RWPE1 (cell line): ENCODE measurements at regions of chr20 and their contacts with region 1.

Region 1: GRCh38 chr20:2206957-2207769 is 88.6 kb upstream of the TGM3 start:
- DNase-seq: peak; percentile 68
- H3K27ac ChIP-seq: no peak overlapping the region
- CTCF ChIP-seq: peak; percentile 83

Region 2: DNA sequence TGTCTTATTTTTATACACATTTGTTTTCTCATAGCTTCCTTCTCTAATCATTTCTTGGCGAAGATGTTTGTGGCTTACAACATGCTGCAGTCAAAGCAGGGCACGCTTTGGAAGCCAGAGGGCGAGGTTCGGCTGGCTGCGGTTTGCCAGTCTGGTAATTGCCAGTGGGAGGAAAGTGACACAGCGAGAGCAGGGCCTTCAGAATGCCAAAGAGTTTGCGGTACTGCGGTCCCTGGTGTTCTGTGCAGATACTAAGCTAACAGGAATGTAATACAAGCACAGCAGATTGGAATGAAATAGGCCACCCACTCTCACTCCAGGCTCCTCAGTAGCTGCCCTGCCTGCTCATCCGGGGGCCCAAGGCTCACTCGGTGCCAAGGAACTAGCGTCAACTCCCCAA is 29.9 kb after region 1 on chr20:
- CTCF ChIA-PET with region 1: interaction called, 27 read pairs
- POLR2A ChIA-PET with region 1: interaction called, 3 read pairs
- DNase-seq: peak; percentile 89
- H3K27ac ChIP-seq: peak overlapping the region; percentile 80
- CTCF ChIP-seq: peak; percentile 55; the same call in 1 of the 2 replicates

Region 3: DNA sequence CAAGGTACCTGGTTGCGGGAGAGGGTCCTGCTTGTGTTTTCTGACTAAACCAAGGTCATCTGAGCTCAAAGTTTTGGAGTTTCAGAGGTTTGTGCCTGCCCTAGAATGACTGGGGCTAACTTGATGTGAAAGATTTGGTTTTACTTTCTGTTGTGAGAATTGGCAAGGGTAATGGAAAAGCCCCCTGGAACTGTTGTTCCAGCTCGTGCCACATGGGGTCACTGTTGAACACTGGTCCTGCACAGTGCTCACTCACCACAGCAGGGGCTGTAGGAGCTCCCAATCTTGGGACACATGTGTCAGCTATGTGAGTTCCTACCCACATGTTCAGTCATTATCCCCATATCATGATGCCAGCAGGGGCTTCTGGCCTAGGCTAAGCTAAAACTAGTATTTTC is 180.0 kb after region 1 on chr20:
- CTCF ChIA-PET with region 1: interaction called, 11 read pairs
- POLR2A ChIA-PET with region 1: no interaction called
- DNase-seq: peak; percentile 65
- H3K27ac ChIP-seq: peak overlapping the region; percentile 88
- CTCF ChIP-seq: peak; percentile 67

Region 4: DNA sequence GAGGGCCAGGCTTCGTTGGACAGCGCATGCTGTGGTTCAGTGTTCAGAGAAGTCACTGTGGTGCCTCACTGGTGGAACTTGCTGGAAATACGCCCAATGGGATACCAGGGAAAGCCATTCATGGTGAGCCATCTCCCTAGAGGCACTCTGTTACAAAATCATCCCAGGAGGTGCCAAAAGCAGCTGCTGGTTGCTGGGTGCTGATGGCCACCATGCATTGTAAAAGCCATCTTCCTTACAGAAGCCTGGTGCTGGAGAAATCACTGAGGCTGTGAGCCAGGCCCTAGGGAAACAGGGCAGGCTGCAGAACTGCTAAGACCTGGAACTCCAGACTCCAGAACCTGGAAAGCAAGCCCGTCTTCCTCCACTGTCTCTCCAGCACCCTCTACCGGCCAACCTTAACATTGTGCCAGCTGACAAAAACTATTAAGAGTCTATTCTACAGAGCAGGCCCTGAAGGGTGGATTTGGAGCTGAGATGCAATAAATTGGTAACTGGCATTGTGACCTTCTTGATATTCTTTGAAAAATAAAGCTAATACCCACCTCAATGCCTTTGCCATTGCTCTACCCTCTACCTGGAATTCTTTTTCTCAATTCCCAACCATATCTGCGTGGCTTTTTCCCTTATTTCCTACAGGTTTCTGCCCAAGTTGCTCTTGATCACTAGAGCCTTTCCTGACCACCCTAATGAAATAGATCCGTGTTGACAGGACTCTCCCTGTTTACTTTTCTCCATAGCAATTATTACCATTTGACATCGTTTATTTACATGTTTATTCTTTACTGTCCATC is 245.0 kb after region 1 on chr20:
- CTCF ChIA-PET with region 1: interaction called, 29 read pairs
- POLR2A ChIA-PET with region 1: interaction called, 3 read pairs
- DNase-seq: peak; percentile 71
- H3K27ac ChIP-seq: peak overlapping the region; percentile 65
- CTCF ChIP-seq: peak; percentile 91

Region 5: DNA sequence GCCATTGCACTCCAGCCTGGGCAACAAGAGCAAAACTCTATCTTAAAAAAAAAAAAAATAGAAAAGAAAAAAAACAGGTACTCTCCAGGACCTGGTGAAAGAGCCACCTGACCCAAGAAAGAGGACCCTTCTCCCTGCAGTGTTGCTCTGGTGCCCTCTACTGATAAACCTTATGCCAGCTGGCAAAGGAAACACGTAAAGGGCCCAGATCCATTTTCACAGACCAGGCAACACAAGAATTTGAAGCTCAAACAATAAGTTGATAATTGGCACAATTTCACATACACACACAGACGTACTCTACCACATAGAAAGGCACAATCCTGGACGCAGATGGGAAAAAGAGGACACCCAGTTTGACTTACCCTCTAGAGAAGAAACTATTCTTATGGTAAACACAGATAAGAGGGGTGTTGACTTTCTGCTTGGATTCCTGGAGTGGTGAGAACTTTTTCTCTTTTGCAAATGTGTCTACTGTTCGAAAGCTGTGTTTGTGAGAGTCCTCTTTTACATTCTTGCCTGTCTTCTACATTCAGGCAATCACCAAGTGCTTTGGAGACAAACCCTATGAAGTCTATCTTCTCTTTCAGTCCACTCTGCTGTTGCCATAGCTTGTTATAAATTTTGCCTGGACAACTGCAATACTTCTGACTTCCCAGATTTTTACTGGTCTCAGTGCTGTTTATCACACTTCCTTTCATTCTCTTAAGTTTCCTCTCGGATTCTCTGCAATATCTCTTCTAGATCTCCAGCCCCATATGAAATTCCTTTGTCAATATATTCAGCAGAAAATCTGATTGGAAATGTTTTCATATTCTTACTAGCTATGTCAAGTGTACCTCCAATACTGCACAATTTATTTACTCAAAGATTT is 269.8 kb after region 1 on chr20:
- CTCF ChIA-PET with region 1: no interaction called
- POLR2A ChIA-PET with region 1: no interaction called
- DNase-seq: no peak
- H3K27ac ChIP-seq: no peak overlapping the region
- CTCF ChIP-seq: no peak